Heart right ventricle (tissue), 16 donors: ENCODE measurements at regions of chr4 and their contacts with region 1.

Region 1: GRCh38 chr4:185425647-185426352 is at the start of gene UFSP2:
- DNase-seq: peak; percentile 89 to 90
- ATAC-seq: peak; percentile 97 to 99 (median 98)
- H3K4me3 ChIP-seq: peak within 1 kb of the TSS; percentile 50 to 89 (median 75)
- H3K27ac ChIP-seq: peak within 1 kb of the TSS; percentile 89 to 97 (median 95)
- H3K4me1 ChIP-seq: peaks cover 0 to 48% (median 32%) of the 10 kb centered on the region in 9 donors
- H3K27me3 ChIP-seq: no peaks in the 10 kb centered on the region
- CTCF ChIP-seq: no peak
- total RNA-seq, gene UFSP2: 29.4 to 52.4 (median 43.7) TPM

Region 2: DNA sequence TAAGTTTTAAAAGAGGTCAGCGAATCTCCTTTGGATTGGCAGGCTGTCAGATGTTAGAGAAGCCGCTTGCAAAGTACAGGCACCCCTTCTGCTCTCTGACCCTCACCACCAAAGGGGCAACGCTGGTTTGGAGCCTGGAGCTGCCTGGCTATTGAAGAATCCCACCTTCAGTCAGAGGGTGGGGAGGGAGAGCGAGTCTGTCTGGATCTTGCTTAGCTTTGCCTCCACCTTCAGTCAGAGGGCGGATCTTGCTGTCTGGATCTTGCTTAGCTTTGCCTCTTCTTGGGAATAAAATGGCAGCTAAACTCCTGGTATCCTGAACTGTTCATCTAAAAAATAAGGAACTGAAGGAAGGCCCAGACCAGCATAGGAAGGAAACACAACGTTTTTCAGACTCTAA is 38.4 kb after region 1 on chr4:
- intact Hi-C with region 1: loop called in 2 of 10 experiments (anchors 5 kb)
- DNase-seq: no peak
- ATAC-seq: no peak
- H3K4me3 ChIP-seq: no peak overlapping the region
- H3K27ac ChIP-seq: no peak overlapping the region
- H3K4me1 ChIP-seq: no peaks in the 10 kb centered on the region
- H3K27me3 ChIP-seq: no peaks in the 10 kb centered on the region
- CTCF ChIP-seq: no peak